ENCODE measurements at regions of chr10 and their contacts with region 1.

Region 1: GRCh38 chr10:117503244-117504205 is 39.0 kb upstream of the EMX2 start:
- ATAC-seq: peak in 5 of 8 experiments; percentile 23 to 97 (median 96)
- H3K4me3 ChIP-seq: no peak overlapping the region
- H3K27ac ChIP-seq: no peak overlapping the region
- H3K4me1 ChIP-seq: peaks cover 7 to 25% of the 10 kb centered on the region in 2 donors

Region 2: GRCh38 chr10:117260084-117260483 is 243.4 kb before region 1 on chr10:
- in situ Hi-C with region 1: no loop called
- ATAC-seq: peak in 1 of 8 experiments; percentile 51
- H3K4me3 ChIP-seq: no peak overlapping the region
- H3K27ac ChIP-seq: no peak overlapping the region
- H3K4me1 ChIP-seq: peaks cover 16 to 33% of the 10 kb centered on the region in 2 donors

Region 3: GRCh38 chr10:117677890-117678500 is 174.5 kb after region 1 on chr10:
- in situ Hi-C with region 1: no loop called
- ATAC-seq: peak in 7 of 8 experiments; percentile 25 to 82 (median 52)
- H3K4me3 ChIP-seq: no peak overlapping the region
- H3K27ac ChIP-seq: no peak overlapping the region
- H3K4me1 ChIP-seq: peaks cover 15 to 37% of the 10 kb centered on the region in 2 donors

Region 4: GRCh38 chr10:118447478-118448270 is 944.1 kb after region 1 on chr10:
- in situ Hi-C with region 1: loop called in 4 of 9 experiments (anchors 25 kb)
- ATAC-seq: peak in 4 of 8 experiments; percentile 14 to 100 (median 92)
- H3K4me3 ChIP-seq: no peak overlapping the region
- H3K27ac ChIP-seq: no peak overlapping the region
- H3K4me1 ChIP-seq: peaks cover 0 to 4% of the 10 kb centered on the region in 2 donors

Region 5: DNA sequence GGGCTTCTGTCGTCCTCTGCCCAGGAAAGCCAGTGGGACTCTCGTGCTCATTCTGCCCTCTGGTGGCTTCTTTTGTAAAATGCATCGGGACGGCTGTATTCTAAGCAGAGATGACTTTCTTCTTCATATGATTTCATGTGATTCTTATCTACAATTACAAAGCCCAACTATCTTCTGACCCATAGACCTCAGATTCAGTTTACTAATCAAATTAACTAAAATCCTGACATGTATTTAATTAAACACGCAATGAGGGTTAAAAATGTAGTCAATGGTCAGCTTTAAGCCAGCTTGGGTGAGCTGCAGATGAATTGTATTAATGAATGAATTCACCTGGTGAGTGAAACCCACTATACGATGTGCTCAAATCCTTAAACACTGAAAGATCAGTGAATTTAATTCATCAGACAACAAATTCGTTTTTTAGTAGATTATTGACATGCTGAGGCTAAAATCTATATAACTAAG is 956.2 kb after region 1 on chr10:
- in situ Hi-C with region 1: loop called in 2 of 9 experiments (anchors 25 kb)
- ATAC-seq: peak; percentile 76 to 96 (median 88)
- H3K4me3 ChIP-seq: no peak overlapping the region
- H3K27ac ChIP-seq: no peak overlapping the region
- H3K4me1 ChIP-seq: no peaks in the 10 kb centered on the region

Measured in motor neuron (in vitro differentiated cells).